ENCODE measurements at regions of chr19 and their contacts with region 1.

Region 1: DNA sequence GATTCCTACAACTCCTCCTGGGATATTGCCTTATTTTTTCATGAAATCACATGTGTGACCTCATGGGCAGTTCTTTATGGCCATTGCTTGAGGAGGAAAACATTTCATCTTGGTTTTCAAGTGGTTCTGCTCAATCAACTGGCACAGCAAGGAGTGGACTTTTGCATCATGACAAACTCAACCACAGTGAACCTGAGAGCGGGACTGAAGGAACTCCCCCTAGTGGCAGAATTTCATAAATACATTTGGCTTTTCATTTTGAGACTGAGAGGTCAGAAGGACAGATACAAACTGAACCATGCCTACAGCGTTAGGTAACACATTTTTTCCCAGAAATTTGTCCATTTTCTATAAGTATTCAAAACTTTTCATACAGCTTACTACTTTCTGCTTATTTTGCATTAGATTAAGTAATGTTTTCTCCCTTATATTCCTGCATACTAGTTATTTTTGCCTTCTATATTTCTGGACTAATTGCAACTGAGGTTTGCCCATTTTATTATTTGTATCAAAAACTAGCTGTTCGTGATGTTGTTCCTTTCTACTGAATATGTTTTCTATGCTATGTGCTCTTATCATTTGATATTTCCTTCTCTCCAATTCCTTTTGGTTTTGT is 13.4 kb upstream of the SIGLEC12 start:
- DNase-seq: peak; percentile 33 to 44 (median 38)
- H3K4me3 ChIP-seq: no peak overlapping the region
- H3K4me3 Mint-ChIP-seq: no peak overlapping the region
- H3K27ac ChIP-seq: no peak overlapping the region
- H3K27ac Mint-ChIP-seq: peak overlapping the region in 1 of 7 donors; percentile 57
- H3K4me1 ChIP-seq: no peaks in the 10 kb centered on the region
- H3K4me1 Mint-ChIP-seq: no peaks in the 10 kb centered on the region
- H3K27me3 ChIP-seq: peaks cover 4% of the 10 kb centered on the region
- H3K27me3 Mint-ChIP-seq: peaks cover 21 to 22% of the 10 kb centered on the region in 2 donors

Region 2: DNA sequence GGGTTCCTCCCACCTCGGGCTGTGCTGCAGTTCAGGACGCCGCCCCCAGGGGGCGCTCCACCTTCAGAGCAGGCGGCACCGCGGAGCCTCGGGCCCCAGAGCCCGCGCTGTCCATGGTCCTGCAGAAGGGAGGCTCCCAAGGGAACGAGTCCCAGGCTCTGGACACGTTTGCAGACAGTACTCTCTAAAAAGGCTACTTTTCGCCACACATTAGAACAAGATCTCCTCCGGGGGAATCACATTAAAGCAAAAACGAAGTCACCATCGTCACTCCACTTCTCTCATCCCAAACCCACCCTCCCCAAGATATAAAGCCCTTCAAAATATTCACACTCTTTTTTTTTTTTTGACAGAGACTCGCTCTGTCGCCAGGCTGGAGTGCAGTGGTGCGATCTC is 92.9 kb before region 1 on chr19:
- CTCF ChIA-PET with region 1: interaction called, 51 read pairs
- POLR2A ChIA-PET with region 1: interaction called, 3 read pairs
- intact Hi-C with region 1: no loop called
- DNase-seq: peak; percentile 67 to 75 (median 69)
- H3K4me3 ChIP-seq: no peak overlapping the region
- H3K4me3 Mint-ChIP-seq: no peak overlapping the region
- H3K27ac ChIP-seq: no peak overlapping the region
- H3K27ac Mint-ChIP-seq: peak overlapping the region in 1 of 7 donors; percentile 24
- H3K4me1 ChIP-seq: no peaks in the 10 kb centered on the region
- H3K4me1 Mint-ChIP-seq: peaks cover 0 to 8% (median 3%) of the 10 kb centered on the region in 4 donors
- H3K27me3 ChIP-seq: no peaks in the 10 kb centered on the region
- H3K27me3 Mint-ChIP-seq: peaks cover 8 to 18% of the 10 kb centered on the region in 2 donors

Region 3: DNA sequence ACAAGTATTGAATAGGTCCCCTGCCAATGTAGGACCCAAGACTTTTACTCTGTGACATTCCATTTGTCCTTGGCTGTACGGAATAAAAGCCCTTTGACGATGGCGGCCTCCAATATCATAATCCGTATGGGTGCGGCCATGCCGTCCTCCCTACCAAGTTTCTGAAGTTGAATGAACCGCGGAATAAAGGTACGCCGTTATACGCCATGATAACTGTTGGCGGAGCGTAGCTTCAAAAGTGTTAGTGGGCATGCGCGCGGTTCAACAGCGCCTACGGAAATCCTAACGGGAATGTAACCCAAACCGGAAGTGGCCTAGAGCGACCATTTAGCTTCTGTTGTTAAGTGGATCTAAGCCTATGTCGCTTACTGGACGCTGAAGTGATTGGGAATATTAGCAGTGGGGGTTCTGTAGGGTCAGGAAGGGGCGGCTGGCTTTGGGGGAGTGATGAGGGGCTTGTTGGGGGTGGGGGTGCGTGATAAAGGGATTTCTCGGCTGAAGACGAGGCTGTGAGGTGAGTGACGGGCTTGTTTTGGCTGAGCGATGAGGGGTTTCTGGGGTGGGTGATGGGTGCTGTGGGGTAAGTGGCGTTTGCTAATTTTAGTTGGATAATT is 56.1 kb after region 1 on chr19 and contains the start of gene ZNF175:
- CTCF ChIA-PET with region 1: no interaction called
- POLR2A ChIA-PET with region 1: no interaction called
- intact Hi-C with region 1: no loop called
- DNase-seq: peak; percentile 71 to 79 (median 74)
- H3K4me3 ChIP-seq: peak within 1 kb of the TSS; percentile 39 to 68
- H3K4me3 Mint-ChIP-seq: peak within 1 kb of the TSS; percentile 94 to 100 (median 96)
- H3K27ac ChIP-seq: no peak within 1 kb of the TSS
- H3K27ac Mint-ChIP-seq: peak within 1 kb of the TSS; percentile 63 to 94 (median 85)
- H3K4me1 ChIP-seq: peaks cover 19% of the 10 kb centered on the region
- H3K4me1 Mint-ChIP-seq: peaks cover 19 to 36% (median 25%) of the 10 kb centered on the region in 4 donors
- H3K27me3 ChIP-seq: no peaks in the 10 kb centered on the region
- H3K27me3 Mint-ChIP-seq: peaks cover 3 to 6% of the 10 kb centered on the region in 2 donors
- total RNA-seq, gene ZNF175: 17.1 to 17.4 TPM